ENCODE measurements at regions of chr12 and their contacts with region 1.

Region 1: DNA sequence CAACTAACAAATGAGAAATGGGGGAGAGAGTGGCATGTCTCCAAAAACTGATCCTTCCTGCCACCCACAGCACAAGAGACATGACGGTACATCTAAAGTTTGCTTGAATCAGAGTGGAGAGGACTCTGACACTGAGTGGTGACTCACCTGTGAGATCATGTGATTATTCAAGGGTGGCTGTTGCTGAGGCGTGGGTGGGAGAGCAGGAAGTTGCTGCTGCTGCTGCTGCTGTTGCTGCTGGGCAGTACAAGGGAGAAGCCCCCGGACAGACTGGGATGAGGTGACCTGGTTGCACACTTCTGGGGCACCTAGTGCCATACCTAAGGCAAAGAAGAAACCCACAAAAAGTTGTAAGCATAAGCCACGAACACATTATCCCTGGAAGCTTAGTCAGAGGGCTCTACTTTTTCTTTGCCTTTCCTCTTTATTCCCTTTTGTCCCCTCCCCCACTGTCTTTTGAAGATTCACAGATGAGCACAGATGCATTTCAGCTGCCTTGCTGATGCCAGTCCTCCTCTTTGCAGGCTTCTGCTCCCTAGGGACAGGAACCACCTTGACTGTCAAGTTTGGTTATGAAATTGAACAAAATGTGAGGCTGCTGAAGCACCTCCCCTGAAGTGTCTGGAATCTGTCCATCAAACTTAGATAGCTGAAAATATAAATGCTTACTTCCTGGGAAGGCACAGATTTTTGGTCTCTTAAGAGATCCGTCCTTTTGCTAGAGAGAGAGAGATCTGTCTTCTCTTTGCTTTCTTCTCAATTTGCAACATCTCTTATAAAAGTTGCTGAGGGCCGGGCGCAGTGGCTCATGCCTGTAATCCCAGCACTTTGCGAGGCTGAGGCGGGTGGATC is 29.4 kb upstream of the STAC3 start:
- DNase-seq: peak; percentile 88
- ATAC-seq: peak; percentile 99
- H3K4me3 Mint-ChIP-seq: peak overlapping the region; percentile 69
- H3K27ac Mint-ChIP-seq: peak overlapping the region; percentile 94
- H3K4me1 Mint-ChIP-seq: peaks cover 23% of the 10 kb centered on the region
- H3K27me3 Mint-ChIP-seq: no peaks in the 10 kb centered on the region

Region 2: GRCh38 chr12:57190037-57190436 is 90.4 kb before region 1 on chr12:
- CTCF ChIA-PET with region 1: no interaction called
- POLR2A ChIA-PET with region 1: no interaction called
- intact Hi-C with region 1: no loop called
- DNase-seq: no peak
- ATAC-seq: no peak
- H3K4me3 Mint-ChIP-seq: no peak overlapping the region
- H3K27ac Mint-ChIP-seq: no peak overlapping the region
- H3K4me1 Mint-ChIP-seq: no peaks in the 10 kb centered on the region
- H3K27me3 Mint-ChIP-seq: no peaks in the 10 kb centered on the region

Region 3: GRCh38 chr12:57238854-57239554 is 41.4 kb before region 1 on chr12:
- CTCF ChIA-PET with region 1: interaction called, 5 read pairs
- POLR2A ChIA-PET with region 1: no interaction called
- intact Hi-C with region 1: loop called in 1 of 2 experiments (anchors 1 kb)
- DNase-seq: peak; percentile 94
- ATAC-seq: peak; percentile 57
- H3K4me3 Mint-ChIP-seq: peak overlapping the region; percentile 83
- H3K27ac Mint-ChIP-seq: peak overlapping the region; percentile 80
- H3K4me1 Mint-ChIP-seq: peaks cover 70% of the 10 kb centered on the region
- H3K27me3 Mint-ChIP-seq: peaks cover 44% of the 10 kb centered on the region

Region 4: GRCh38 chr12:57261428-57261865 is 19.0 kb before region 1 on chr12:
- CTCF ChIA-PET with region 1: interaction called, 10 read pairs
- POLR2A ChIA-PET with region 1: no interaction called
- intact Hi-C with region 1: no loop called
- DNase-seq: no peak
- ATAC-seq: no peak
- H3K4me3 Mint-ChIP-seq: no peak overlapping the region
- H3K27ac Mint-ChIP-seq: no peak overlapping the region
- H3K4me1 Mint-ChIP-seq: peaks cover 3% of the 10 kb centered on the region
- H3K27me3 Mint-ChIP-seq: no peaks in the 10 kb centered on the region

Region 5: DNA sequence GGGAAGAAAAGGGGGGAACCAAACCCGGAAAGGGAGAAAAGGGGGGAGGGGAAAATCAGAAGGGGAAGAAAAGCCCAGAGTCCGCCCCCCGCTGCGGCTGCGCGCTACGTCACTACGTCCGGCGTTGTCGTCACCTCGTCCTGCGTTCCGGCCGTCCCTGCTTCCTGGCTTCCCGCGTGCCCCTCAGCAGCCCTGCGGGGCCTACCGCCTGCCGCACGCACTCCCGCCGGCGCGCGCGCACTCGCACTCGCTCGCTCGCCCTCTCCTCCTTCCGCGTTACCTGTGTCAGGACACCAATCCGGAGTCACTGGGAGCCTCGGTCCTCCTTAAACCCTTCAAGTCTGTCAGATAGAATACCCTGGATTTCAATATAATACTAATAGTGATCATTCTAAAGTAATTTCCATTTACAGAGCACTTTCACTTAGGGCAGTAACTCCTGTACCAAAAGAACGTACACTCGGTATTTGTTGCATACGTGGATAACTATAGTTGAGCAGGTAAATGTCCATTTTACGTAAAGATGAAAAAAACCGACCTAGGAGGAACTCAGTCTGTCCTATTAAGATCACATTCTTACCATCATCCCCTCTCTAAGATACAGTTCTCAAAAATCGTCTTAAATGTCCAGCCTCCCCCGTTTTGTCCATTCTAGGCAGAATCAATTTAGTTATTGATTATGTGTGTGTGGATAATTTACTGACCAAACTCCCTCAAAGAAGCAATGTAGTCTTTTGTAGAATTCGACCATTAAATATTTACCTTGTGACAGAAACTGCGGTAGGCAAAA is 150.7 kb after region 1 on chr12 and contains the start of gene R3HDM2:
- CTCF ChIA-PET with region 1: no interaction called
- POLR2A ChIA-PET with region 1: no interaction called
- intact Hi-C with region 1: loop called (anchors 1 kb)
- DNase-seq: peak; percentile 97
- ATAC-seq: peak; percentile 95
- H3K4me3 Mint-ChIP-seq: peak within 1 kb of the TSS; percentile 89
- H3K27ac Mint-ChIP-seq: peak within 1 kb of the TSS; percentile 100
- H3K4me1 Mint-ChIP-seq: peaks cover 35% of the 10 kb centered on the region
- H3K27me3 Mint-ChIP-seq: no peaks in the 10 kb centered on the region
- total RNA-seq, gene R3HDM2: 45.9 to 52.5 TPM

Region 6: GRCh38 chr12:57546438-57547383 is 266.3 kb after region 1 on chr12 and contains the start of gene DCTN2:
- CTCF ChIA-PET with region 1: no interaction called
- POLR2A ChIA-PET with region 1: no interaction called
- intact Hi-C with region 1: loop called in 1 of 2 experiments (anchors 1 kb)
- DNase-seq: peak; percentile 97
- ATAC-seq: peak; percentile 98
- H3K4me3 Mint-ChIP-seq: peak within 1 kb of the TSS; percentile 99
- H3K27ac Mint-ChIP-seq: peak within 1 kb of the TSS; percentile 99
- H3K4me1 Mint-ChIP-seq: peaks cover 45% of the 10 kb centered on the region
- H3K27me3 Mint-ChIP-seq: peaks cover 13% of the 10 kb centered on the region
- total RNA-seq, gene DCTN2: 69.7 to 81.2 TPM